AG04450 (cell line): ENCODE measurements at regions of chr1 and their contacts with region 1.

Region 1: GRCh38 chr1:47558601-47559593 is 121.1 kb downstream of the FOXD2 start:
- DNase-seq: no peak
- H3K4me3 ChIP-seq: no peak overlapping the region
- H3K27ac ChIP-seq: no peak overlapping the region
- H3K27me3 ChIP-seq: peaks cover 36% of the 10 kb centered on the region
- CTCF ChIP-seq: no peak

Region 2: GRCh38 chr1:47569681-47570470 is 11.0 kb after region 1 on chr1:
- CTCF ChIA-PET with region 1: interaction called, 21 read pairs
- POLR2A ChIA-PET with region 1: no interaction called
- DNase-seq: peak; percentile 68
- H3K4me3 ChIP-seq: no peak overlapping the region
- H3K27ac ChIP-seq: no peak overlapping the region
- H3K27me3 ChIP-seq: no peaks in the 10 kb centered on the region
- CTCF ChIP-seq: peak; percentile 61

Region 3: DNA sequence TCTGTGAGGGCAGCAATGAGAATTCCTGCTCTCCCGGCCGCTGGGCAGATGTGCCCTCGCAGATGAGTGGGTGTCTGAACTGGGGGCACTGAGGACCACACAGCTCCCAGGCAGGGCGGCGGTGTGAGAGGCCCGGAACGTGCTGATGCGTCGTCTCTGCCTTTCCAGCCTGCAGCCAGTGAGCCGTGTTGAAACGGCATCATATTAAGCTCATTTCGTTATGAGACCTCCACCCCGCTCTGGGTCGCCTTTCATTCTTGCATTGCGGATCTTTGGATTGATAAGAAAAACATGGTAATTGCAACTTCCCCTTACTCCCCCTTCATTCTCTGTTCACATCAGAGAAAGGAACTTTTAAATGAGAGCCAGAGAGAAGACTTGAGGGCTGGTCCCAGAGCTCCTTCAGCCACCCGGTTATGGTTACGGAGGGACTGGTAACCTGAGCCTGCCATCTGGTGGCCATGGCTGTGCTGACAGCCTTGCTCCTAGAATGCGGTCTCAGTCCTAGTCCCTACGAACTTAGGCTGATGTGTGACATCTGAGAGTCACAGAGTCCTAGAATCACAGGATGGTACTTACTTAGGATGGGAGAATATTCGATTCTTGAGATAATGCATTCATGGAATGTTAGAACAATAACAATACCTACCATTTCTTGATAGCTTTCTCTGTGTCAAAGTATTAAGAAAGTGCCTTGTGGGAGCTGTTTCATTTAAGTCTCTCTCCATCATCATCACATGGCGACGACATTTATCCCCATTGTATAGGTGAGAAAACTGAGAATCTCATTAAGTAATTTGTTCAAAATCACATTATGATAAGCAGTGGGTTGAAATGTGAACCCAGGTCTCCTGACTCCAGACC is 167.3 kb after region 1 on chr1:
- CTCF ChIA-PET with region 1: no interaction called
- POLR2A ChIA-PET with region 1: no interaction called
- DNase-seq: peak; percentile 26
- H3K4me3 ChIP-seq: peak overlapping the region; percentile 25; the same call in 1 of the 2 replicates
- H3K27ac ChIP-seq: no peak overlapping the region
- H3K27me3 ChIP-seq: peaks cover 24% of the 10 kb centered on the region
- CTCF ChIP-seq: peak; percentile 89